ENCODE measurements at regions of chr17 and their contacts with region 1.

Region 1: DNA sequence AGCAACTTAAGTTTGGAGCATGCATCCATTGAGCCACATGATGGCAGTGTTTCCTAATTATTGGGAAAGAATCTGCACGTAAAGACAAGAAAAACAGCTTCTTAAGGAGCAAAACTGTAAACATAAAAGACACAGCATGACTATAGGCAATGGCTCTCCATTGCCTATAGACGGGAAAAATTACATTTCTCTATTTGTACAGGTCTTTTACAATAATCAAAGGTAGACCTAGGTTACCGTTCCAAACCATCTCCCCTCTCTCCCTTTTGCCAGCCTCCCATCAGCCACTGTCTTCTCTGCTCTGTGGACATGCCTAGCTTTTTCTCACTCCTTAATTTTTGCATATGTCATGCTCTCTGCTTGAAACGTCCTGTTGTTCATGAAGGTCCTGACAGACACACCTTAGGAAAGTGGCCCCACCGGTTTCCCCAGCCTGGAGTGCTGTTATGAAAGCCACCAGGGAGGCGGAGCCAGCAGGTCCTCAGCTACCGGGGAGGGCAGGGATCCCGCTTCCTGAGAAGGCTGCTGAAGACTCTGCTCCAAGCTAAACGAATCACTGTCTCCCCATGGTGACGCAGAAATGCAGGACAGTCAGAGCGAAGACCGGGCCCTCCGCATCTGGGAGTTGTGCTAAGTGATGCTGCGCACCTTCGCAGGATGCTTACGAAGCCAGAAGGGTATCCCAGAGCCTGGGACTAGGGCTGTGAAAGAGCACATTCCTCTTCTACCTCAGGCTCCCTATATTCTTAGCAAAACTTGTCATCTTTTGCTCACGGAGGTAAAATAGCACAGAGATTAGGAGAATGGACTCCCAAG is 2.2 kb upstream of the SLC16A11 start:
- DNase-seq: peak; percentile 67 to 71 (median 70)
- H3K4me3 ChIP-seq: peak overlapping the region; percentile 21 to 65 (median 33)
- H3K4me3 Mint-ChIP-seq: peak overlapping the region; percentile 71 to 92
- H3K27ac ChIP-seq: no peak overlapping the region
- H3K27ac Mint-ChIP-seq: peak overlapping the region in 6 of 7 donors; percentile 26 to 89 (median 66)
- H3K4me1 ChIP-seq: peaks cover 43 to 46% of the 10 kb centered on the region in 2 donors
- H3K4me1 Mint-ChIP-seq: peaks cover 34% of the 10 kb centered on the region
- H3K27me3 ChIP-seq: peaks cover 32 to 45% of the 10 kb centered on the region in 2 donors
- H3K27me3 Mint-ChIP-seq: peaks cover 41 to 51% (median 49%) of the 10 kb centered on the region in 3 donors
- CTCF ChIP-seq: peak; percentile 89

Region 2: GRCh38 chr17:7035591-7036368 is 10.3 kb before region 1 on chr17 and contains the start of gene SLC16A13:
- intact Hi-C with region 1: no loop called
- DNase-seq: peak; percentile 96 to 98 (median 98)
- H3K4me3 ChIP-seq: peak within 1 kb of the TSS; percentile 73 to 86 (median 80)
- H3K4me3 Mint-ChIP-seq: peak within 1 kb of the TSS; percentile 93 to 98
- H3K27ac ChIP-seq: peak within 1 kb of the TSS; percentile 87 to 91
- H3K27ac Mint-ChIP-seq: peak within 1 kb of the TSS; percentile 89 to 95 (median 94)
- H3K4me1 ChIP-seq: peaks cover 20% of the 10 kb centered on the region in 2 donors
- H3K4me1 Mint-ChIP-seq: peaks cover 30% of the 10 kb centered on the region
- H3K27me3 ChIP-seq: no peaks in the 10 kb centered on the region
- H3K27me3 Mint-ChIP-seq: peaks cover 2 to 8% (median 4%) of the 10 kb centered on the region in 3 donors
- CTCF ChIP-seq: no peak
- polyA plus RNA-seq, gene SLC16A13: 0.93 to 3.1 (median 2.2) TPM

Region 3: DNA sequence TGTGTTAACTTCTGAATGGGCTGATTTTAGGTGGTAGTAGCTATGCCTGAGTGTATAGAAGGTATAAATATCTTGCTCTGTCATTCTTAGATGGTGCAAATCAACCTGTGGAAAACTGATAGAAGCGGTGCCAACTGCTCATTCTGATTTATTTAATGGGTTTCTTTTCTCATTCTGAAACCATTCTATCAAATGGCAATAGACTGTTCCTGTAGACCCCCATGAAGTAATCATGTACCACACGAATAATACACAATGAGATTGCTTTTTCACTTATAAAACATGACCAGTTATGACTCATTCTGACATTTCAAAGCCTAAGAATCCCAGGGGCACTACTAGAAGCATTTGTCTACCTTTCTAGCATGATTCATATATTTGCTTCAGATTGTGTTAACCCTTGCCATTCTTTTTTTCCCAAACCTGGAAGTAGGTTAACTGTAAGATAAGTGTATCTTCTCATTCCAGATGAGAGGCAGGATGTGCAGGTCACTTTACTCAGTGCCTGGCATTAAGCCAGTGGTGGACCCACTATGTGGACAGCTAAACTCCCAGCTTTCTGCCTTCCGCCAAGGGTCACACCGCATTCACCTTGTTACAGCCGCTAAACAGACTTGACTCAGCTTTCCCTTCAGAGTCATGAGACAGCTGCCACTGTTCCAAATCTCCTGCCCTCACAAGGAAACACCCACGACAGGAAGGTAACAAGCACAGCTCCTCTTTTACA is 14.2 kb after region 1 on chr17:
- intact Hi-C with region 1: no loop called
- DNase-seq: peak in 1 of 3 donors; percentile 47
- H3K4me3 ChIP-seq: no peak overlapping the region
- H3K4me3 Mint-ChIP-seq: no peak overlapping the region
- H3K27ac ChIP-seq: no peak overlapping the region
- H3K27ac Mint-ChIP-seq: peak overlapping the region in 2 of 7 donors; percentile 10 to 14
- H3K4me1 ChIP-seq: peaks cover 19 to 28% of the 10 kb centered on the region in 2 donors
- H3K4me1 Mint-ChIP-seq: peaks cover 32% of the 10 kb centered on the region
- H3K27me3 ChIP-seq: no peaks in the 10 kb centered on the region
- H3K27me3 Mint-ChIP-seq: peaks cover 4 to 10% (median 8%) of the 10 kb centered on the region in 3 donors
- CTCF ChIP-seq: no peak

Region 4: DNA sequence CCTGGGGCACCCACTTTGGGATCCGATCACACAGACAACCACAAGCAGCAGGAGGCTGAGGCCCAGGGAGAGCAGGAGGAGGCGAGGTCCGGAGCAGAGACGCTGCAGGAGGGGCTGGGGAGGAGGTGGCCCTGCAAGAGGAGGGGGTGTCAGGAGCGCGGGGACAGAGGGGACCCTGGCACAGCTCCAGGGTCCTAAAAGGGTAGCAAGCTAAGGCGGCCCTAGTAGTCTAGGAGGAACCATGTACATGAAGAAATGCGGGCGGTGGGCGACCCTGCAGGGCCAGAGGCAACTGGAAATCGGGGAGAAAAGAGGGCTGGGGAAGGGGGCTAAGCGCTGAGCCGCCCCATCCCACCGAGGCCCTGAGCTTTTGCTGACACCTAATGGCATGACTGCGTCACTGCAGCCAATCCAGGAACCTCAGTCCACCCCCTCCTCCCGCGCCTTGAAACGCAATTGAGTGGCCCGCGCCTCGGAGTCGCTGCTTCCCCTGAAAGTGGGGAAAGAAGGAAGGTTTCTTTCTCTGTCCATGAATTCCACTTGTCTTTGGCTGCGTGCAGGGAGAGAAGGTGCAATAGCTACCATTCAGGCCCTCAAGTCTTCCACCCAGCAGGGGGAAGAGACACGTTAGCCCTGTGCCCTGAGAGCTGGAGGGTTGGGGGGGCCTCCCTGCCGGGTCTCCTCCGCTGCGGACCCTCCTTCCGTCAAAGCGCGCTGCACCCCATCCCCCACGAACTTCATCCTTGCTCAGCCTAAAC is 131.3 kb after region 1 on chr17:
- intact Hi-C with region 1: loop called (anchors 1 to 2 kb)
- DNase-seq: peak; percentile 67 to 79 (median 78)
- H3K4me3 ChIP-seq: peak overlapping the region in 1 of 3 experiments; percentile 72
- H3K4me3 Mint-ChIP-seq: peak overlapping the region in 1 of 2 donors; percentile 86
- H3K27ac ChIP-seq: no peak overlapping the region
- H3K27ac Mint-ChIP-seq: peak overlapping the region in 5 of 7 donors; percentile 6 to 64 (median 30)
- H3K4me1 ChIP-seq: peaks cover 32 to 38% of the 10 kb centered on the region in 2 donors
- H3K4me1 Mint-ChIP-seq: peaks cover 15% of the 10 kb centered on the region
- H3K27me3 ChIP-seq: peaks cover 5 to 11% of the 10 kb centered on the region in 2 donors
- H3K27me3 Mint-ChIP-seq: peaks cover 16 to 19% (median 19%) of the 10 kb centered on the region in 3 donors
- CTCF ChIP-seq: peak; percentile 98

Region 5: GRCh38 chr17:7394452-7395191 is 348.5 kb after region 1 on chr17 and contains the start of gene PLSCR3:
- intact Hi-C with region 1: no loop called
- DNase-seq: peak; percentile 69 to 73 (median 70)
- H3K4me3 ChIP-seq: peak within 1 kb of the TSS; percentile 61 to 94 (median 79)
- H3K4me3 Mint-ChIP-seq: peak within 1 kb of the TSS; percentile 86 to 95
- H3K27ac ChIP-seq: peak within 1 kb of the TSS; percentile 59 to 81
- H3K27ac Mint-ChIP-seq: peak within 1 kb of the TSS; percentile 83 to 95 (median 90)
- H3K4me1 ChIP-seq: peaks cover 15 to 19% of the 10 kb centered on the region in 2 donors
- H3K4me1 Mint-ChIP-seq: peaks cover 15% of the 10 kb centered on the region
- H3K27me3 ChIP-seq: no peaks in the 10 kb centered on the region
- H3K27me3 Mint-ChIP-seq: peaks cover 0 to 5% (median 3%) of the 10 kb centered on the region in 3 donors
- CTCF ChIP-seq: peak; percentile 21
- polyA plus RNA-seq, gene PLSCR3: 37.6 to 70.4 (median 45.7) TPM